ENCODE measurements at regions of chr11 and their contacts with region 1.

Region 1: DNA sequence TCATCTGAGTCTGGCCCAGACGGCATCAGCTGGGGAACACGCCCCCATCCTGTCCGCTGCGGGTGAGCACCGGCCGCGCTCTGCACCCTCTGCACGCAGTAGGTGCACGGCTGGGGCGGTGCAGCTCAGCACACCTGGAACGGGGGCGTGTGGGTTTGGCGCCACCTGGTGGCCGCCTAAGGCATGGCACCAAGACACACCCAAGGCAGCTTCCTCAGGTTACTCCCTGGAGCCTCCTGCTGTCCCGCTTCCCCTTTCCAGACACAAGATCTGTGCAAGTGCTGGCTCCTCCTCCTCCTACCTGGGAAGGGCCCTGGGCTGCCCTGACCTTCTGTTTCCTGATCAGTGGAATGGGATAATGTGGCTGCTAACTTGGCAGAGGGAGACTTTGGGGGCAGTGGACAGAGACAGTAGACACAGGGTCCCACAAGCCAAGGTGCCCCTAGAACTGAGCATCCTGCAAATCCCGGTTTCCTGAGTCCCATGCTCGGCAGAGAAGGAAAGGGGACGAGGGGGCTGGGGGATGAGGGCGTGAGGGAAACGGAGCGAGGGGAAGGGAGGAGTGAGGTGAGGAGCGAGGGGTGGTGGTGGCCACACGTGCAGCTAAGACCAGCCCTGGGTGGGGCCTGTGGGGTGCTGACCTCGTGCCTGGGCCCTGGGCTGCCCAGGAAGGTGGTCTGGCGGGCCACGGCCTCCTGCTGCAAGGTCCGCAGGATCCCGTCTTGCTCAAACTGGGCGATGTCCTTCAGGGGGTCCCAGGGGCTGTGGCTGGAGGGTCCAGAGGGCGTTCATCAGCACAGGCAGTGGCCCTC is 34.8 kb upstream of the CARS1 start:
- DNase-seq: peak; percentile 63 to 70
- H3K4me3 ChIP-seq: no peak overlapping the region
- H3K27ac ChIP-seq: no peak overlapping the region
- H3K4me1 ChIP-seq: no peaks in the 10 kb centered on the region
- H3K27me3 ChIP-seq: no peaks in the 10 kb centered on the region
- CTCF ChIP-seq: peak; percentile 95 to 97 (median 96)
- POLR2A ChIP-seq: no peak

Region 2: DNA sequence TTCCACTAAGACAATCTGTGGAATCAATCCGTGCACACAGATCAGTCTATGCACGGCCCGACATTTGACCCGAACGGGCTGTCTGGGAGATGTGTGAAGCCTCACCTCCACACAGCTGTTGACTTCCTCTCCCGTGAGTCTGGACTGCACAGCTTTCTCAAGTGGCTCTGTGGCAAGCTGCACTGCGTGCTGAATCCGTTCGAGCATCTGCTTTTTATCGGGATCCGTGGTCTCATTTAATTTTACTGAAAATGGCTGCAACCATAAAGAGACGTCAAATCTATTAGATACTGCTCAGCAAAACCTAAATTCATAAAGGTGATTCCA is 54.1 kb before region 1 on chr11:
- intact Hi-C with region 1: loop called (anchors 2 kb)
- DNase-seq: no peak
- H3K4me3 ChIP-seq: no peak overlapping the region
- H3K27ac ChIP-seq: no peak overlapping the region
- H3K4me1 ChIP-seq: no peaks in the 10 kb centered on the region
- H3K27me3 ChIP-seq: no peaks in the 10 kb centered on the region
- CTCF ChIP-seq: no peak
- POLR2A ChIP-seq: no peak

Region 3: GRCh38 chr11:3203221-3204043 is 111.4 kb after region 1 on chr11:
- intact Hi-C with region 1: no loop called
- DNase-seq: no peak
- H3K4me3 ChIP-seq: no peak overlapping the region
- H3K27ac ChIP-seq: no peak overlapping the region
- H3K4me1 ChIP-seq: peaks cover 0 to 9% of the 10 kb centered on the region in 2 donors
- H3K27me3 ChIP-seq: peaks cover 0 to 9% of the 10 kb centered on the region in 2 donors
- CTCF ChIP-seq: no peak
- POLR2A ChIP-seq: no peak

Measured in uterus (tissue), 4 donors.